ENCODE measurements at regions of chrX and their contacts with region 1.

Region 1: DNA sequence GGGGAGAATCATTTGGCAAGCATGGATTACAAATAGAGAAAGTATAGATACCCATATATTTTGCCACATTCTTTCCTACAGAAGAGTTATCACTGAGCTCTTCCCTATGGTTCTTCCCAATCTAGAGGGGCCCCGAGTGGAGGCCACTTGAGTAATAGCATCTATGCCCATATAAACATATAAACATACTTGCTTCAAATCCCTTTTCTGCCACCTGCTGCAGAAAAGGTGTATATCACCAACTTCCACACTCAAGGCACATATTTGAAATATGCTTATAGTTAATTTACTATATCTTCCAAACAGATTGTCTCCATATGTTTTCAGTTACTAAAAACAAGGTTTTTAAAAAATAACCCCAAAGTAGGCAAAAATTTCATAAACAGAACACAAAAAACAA is 642.8 kb upstream of the DIPK2B start:
- DNase-seq: peak; percentile 45
- ATAC-seq: peak; percentile 48
- H3K4me3 Mint-ChIP-seq: no peak overlapping the region
- H3K27ac Mint-ChIP-seq: peak overlapping the region; percentile 64
- H3K4me1 Mint-ChIP-seq: peaks cover 63% of the 10 kb centered on the region
- H3K27me3 Mint-ChIP-seq: no peaks in the 10 kb centered on the region

Region 2: GRCh38 chrX:45801554-45801953 is 42.0 kb before region 1 on chrX:
- CTCF ChIA-PET with region 1: interaction called, 24 read pairs
- DNase-seq: no peak
- ATAC-seq: peak; percentile 63
- H3K4me3 Mint-ChIP-seq: no peak overlapping the region
- H3K27ac Mint-ChIP-seq: peak overlapping the region; percentile 75
- H3K4me1 Mint-ChIP-seq: peaks cover 69% of the 10 kb centered on the region
- H3K27me3 Mint-ChIP-seq: no peaks in the 10 kb centered on the region

Region 3: DNA sequence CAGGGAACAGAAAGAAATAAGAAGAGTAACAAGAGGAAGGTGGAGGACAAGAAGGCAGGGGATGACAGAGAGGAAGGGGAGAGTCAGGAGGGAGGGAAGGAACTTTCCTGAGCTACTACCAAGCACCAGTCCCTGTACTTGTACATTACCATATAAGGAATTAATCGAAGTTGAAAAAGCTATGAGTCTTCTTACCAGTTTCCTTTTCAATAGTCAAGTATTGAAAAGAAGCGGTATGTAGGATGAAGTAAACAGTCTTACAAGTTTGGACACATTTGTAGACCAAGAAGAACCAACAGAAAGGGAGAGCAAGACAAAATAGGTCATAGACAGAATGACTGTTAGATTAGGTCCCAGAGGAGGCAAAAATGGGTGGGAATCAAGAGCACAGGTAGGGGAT is 13.2 kb before region 1 on chrX:
- CTCF ChIA-PET with region 1: interaction called, 11 read pairs
- DNase-seq: no peak
- ATAC-seq: peak; percentile 57
- H3K4me3 Mint-ChIP-seq: peak overlapping the region; percentile 28
- H3K27ac Mint-ChIP-seq: peak overlapping the region; percentile 80
- H3K4me1 Mint-ChIP-seq: peaks cover 48% of the 10 kb centered on the region
- H3K27me3 Mint-ChIP-seq: no peaks in the 10 kb centered on the region

Measured in activated CD8-positive, alpha-beta memory T cell treated with anti-CD3 and anti-CD28 coated beads, Interleukin-2, amount 10 ng/mL, durations not matched to agents 7 days and 5 days (primary cell).